Activated naive CD4-positive, alpha-beta T cell treated with anti-CD3 and anti-CD28 coated beads for 36 hours (primary cell): ENCODE measurements at regions of chr10 and their contacts with region 1.

Region 1: DNA sequence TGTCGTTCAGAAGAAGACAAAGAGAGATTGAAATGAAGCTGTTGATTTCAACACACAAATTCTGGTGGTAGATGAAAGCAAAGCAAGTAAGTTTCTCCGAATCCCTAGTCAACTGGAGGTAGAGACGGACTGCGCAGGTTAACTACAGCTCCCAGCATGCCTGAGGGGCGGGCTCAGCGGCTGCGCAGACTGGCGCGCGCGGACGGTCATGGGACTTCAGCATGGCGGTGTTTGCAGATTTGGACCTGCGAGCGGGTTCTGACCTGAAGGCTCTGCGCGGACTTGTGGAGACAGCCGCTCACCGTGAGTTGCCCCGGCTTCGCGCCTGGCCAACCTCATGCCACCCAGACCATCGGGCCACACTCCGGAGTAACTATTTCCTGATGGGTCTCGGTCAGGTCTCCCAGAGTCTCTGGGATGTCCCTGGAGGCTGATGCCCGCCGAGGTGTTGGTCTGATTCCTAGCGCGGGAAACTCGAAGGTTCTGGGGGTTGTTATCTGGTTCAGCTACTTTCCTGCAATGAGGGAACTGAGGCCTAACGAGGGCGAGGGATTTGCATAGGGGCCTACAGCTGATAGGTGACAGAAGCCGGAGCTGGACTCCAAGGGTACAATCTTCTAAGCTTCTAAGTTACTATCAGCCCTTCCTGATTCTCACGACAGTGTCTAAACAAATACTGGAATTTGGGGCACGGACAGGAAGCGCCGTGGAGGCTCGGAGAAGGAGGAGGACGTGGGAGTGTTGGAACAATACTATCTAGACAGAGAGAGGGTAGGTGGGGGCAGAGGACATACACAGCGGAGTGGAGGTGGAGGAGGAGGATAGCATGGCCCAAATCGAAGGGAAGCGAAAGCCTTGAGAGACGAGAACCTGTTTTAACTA is at the start of gene RPP30:
- DNase-seq: peak; percentile 89
- H3K4me3 Mint-ChIP-seq: peak within 1 kb of the TSS; percentile 96
- H3K27ac Mint-ChIP-seq: peak within 1 kb of the TSS; percentile 90
- H3K4me1 Mint-ChIP-seq: peaks cover 24% of the 10 kb centered on the region
- H3K27me3 Mint-ChIP-seq: peaks cover 14% of the 10 kb centered on the region
- total RNA-seq, gene RPP30: 74.7 to 75.8 TPM

Region 2: DNA sequence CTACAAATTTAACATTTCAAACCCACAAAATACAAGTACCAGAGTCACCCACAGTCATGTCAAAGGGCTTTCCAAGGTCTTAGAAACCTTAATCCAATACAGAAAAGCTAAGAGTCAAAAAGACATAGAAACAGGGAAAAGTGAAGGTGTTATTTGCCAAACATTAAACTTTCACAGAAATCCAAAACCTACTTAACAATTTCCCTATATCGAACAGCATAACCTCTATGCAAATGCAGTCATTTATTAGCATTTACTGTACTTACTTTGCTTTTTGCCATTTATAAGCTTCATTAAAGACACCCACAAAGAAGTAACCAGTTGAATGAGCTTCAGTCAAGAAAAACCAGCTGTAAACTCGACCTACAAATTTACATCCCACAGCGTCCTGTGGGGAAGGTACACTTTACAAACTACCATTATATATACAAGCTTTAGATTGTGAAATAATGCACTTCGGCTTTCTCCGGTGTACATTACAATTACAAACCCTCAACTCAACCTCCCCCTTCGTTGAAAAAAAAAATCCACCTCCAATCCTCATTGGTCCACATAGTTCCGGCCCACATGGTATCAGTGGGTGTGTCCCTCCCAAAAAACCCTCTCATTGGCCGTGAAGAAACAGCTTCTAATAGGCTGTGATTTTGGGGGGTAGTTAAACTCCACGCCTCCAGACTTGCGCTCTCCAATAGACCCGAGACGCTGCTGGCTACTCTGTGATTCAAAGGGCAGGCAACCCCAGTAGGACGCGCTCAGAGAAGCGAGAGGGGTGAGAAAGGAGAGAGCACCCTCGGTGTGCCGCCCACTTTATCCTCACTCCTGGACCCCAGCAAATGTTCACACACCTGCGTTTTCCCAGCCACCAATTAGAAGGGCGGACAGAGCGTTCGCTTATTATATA is 1228.3 kb before region 1 on chr10:
- CTCF ChIA-PET with region 1: no interaction called
- intact Hi-C with region 1: loop called (anchors 10 kb)
- DNase-seq: peak; percentile 79
- H3K4me3 Mint-ChIP-seq: no peak overlapping the region
- H3K27ac Mint-ChIP-seq: no peak overlapping the region
- H3K4me1 Mint-ChIP-seq: peaks cover 8% of the 10 kb centered on the region
- H3K27me3 Mint-ChIP-seq: peaks cover 4% of the 10 kb centered on the region

Region 3: GRCh38 chr10:89805599-89806013 is 1066.4 kb before region 1 on chr10:
- CTCF ChIA-PET with region 1: no interaction called
- intact Hi-C with region 1: loop called (anchors 1 kb)
- DNase-seq: peak; percentile 90
- H3K4me3 Mint-ChIP-seq: no peak overlapping the region
- H3K27ac Mint-ChIP-seq: peak overlapping the region; percentile 27
- H3K4me1 Mint-ChIP-seq: peaks cover 26% of the 10 kb centered on the region
- H3K27me3 Mint-ChIP-seq: peaks cover 33% of the 10 kb centered on the region

Region 4: GRCh38 chr10:90227217-90227656 is 644.8 kb before region 1 on chr10:
- CTCF ChIA-PET with region 1: no interaction called
- intact Hi-C with region 1: loop called (anchors 1 kb)
- DNase-seq: peak; percentile 82
- H3K4me3 Mint-ChIP-seq: no peak overlapping the region
- H3K27ac Mint-ChIP-seq: no peak overlapping the region
- H3K4me1 Mint-ChIP-seq: peaks cover 13% of the 10 kb centered on the region
- H3K27me3 Mint-ChIP-seq: peaks cover 26% of the 10 kb centered on the region

Region 5: GRCh38 chr10:90718182-90718581 is 153.8 kb before region 1 on chr10:
- CTCF ChIA-PET with region 1: no interaction called
- intact Hi-C with region 1: no loop called
- DNase-seq: no peak
- H3K4me3 Mint-ChIP-seq: no peak overlapping the region
- H3K27ac Mint-ChIP-seq: no peak overlapping the region
- H3K4me1 Mint-ChIP-seq: peaks cover 4% of the 10 kb centered on the region
- H3K27me3 Mint-ChIP-seq: no peaks in the 10 kb centered on the region

Region 6: GRCh38 chr10:90847417-90847816 is 24.6 kb before region 1 on chr10:
- CTCF ChIA-PET with region 1: no interaction called
- intact Hi-C with region 1: no loop called
- DNase-seq: peak; percentile 25
- H3K4me3 Mint-ChIP-seq: no peak overlapping the region
- H3K27ac Mint-ChIP-seq: no peak overlapping the region
- H3K4me1 Mint-ChIP-seq: peaks cover 1% of the 10 kb centered on the region
- H3K27me3 Mint-ChIP-seq: peaks cover 33% of the 10 kb centered on the region

Region 7: GRCh38 chr10:90905925-90906324 is 33.9 kb after region 1 on chr10:
- CTCF ChIA-PET with region 1: no interaction called
- intact Hi-C with region 1: loop called (anchors 2 kb)
- DNase-seq: no peak
- H3K4me3 Mint-ChIP-seq: no peak overlapping the region
- H3K27ac Mint-ChIP-seq: peak overlapping the region; percentile 4
- H3K4me1 Mint-ChIP-seq: peaks cover 18% of the 10 kb centered on the region
- H3K27me3 Mint-ChIP-seq: no peaks in the 10 kb centered on the region

Region 8: DNA sequence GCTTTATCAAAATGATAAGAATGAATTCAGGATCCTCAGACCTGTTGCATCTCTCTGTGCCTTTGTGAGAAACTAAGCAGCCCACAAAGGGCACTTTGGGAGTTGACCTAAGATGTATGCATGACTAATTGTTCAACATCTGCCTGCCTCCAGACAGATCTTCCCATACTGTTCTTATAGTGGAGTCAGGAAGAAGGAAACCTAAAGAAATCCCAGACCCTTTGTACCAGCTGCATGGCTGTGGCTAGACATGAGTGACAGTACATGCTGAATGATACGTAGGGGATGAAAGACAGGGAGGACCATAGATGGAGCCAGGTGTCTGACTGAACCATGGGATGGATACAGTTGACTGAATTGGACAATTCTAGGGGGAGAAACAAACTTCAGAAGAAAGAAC is 199.8 kb after region 1 on chr10:
- CTCF ChIA-PET with region 1: no interaction called
- intact Hi-C with region 1: no loop called
- DNase-seq: no peak
- H3K4me3 Mint-ChIP-seq: no peak overlapping the region
- H3K27ac Mint-ChIP-seq: no peak overlapping the region
- H3K4me1 Mint-ChIP-seq: no peaks in the 10 kb centered on the region
- H3K27me3 Mint-ChIP-seq: peaks cover 4% of the 10 kb centered on the region

Region 9: GRCh38 chr10:91409869-91410637 is 538.0 kb after region 1 on chr10 and contains the start of gene HECTD2:
- CTCF ChIA-PET with region 1: no interaction called
- intact Hi-C with region 1: loop called (anchors 2 kb)
- DNase-seq: peak; percentile 77
- H3K4me3 Mint-ChIP-seq: peak within 1 kb of the TSS; percentile 83
- H3K27ac Mint-ChIP-seq: peak within 1 kb of the TSS; percentile 88
- H3K4me1 Mint-ChIP-seq: peaks cover 15% of the 10 kb centered on the region
- H3K27me3 Mint-ChIP-seq: peaks cover 12% of the 10 kb centered on the region
- total RNA-seq, gene HECTD2: 2.3 to 3.1 TPM